ENCODE measurements at regions of chr1 and their contacts with region 1.

Region 1: GRCh38 chr1:115469703-115470476 is 131.8 kb upstream of the NGF start:
- DNase-seq: peak; percentile 80 to 96
- H3K4me3 ChIP-seq: peak overlapping the region; percentile 10; the same call in 1 of the 2 replicates
- H3K27ac ChIP-seq: peak overlapping the region; percentile 81
- H3K4me1 ChIP-seq: peaks cover 58% of the 10 kb centered on the region
- H3K27me3 ChIP-seq: no peaks in the 10 kb centered on the region
- CTCF ChIP-seq: peak; percentile 100

Region 2: DNA sequence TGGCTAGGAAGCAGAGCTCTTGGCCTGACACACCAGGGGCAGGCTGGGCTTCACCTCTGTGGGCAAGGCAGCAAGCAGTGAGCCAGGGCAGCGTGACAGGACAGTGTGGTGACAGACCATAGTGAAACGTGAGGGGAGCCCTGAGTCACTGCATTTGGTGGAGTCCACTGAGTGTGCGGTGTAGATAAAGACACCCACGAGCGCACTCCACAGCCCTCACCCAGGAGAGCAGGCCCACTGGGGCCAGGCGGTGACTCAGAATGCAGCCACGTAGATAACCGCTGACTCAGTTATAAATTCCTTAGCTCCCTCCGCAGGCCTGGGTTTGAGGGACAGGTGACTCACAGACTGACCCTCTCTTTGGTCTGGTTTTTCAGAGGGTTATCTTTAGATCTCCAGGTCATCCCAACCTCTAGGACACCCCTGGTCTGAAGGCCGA is 290.5 kb before region 1 on chr1:
- CTCF ChIA-PET with region 1: no interaction called
- POLR2A ChIA-PET with region 1: no interaction called
- intact Hi-C with region 1: loop called (anchors 1 kb)
- DNase-seq: peak; percentile 92 to 100
- H3K4me3 ChIP-seq: no peak overlapping the region
- H3K27ac ChIP-seq: peak overlapping the region; percentile 89
- H3K4me1 ChIP-seq: peaks cover 57% of the 10 kb centered on the region
- H3K27me3 ChIP-seq: no peaks in the 10 kb centered on the region
- CTCF ChIP-seq: no peak

Region 3: GRCh38 chr1:115411371-115412063 is 58.4 kb before region 1 on chr1:
- CTCF ChIA-PET with region 1: no interaction called
- POLR2A ChIA-PET with region 1: no interaction called
- intact Hi-C with region 1: no loop called
- DNase-seq: peak in 1 of 2 experiments; percentile 97
- H3K4me3 ChIP-seq: no peak overlapping the region
- H3K27ac ChIP-seq: peak overlapping the region; percentile 47
- H3K4me1 ChIP-seq: peaks cover 23% of the 10 kb centered on the region
- H3K27me3 ChIP-seq: no peaks in the 10 kb centered on the region
- CTCF ChIP-seq: no peak

Region 4: DNA sequence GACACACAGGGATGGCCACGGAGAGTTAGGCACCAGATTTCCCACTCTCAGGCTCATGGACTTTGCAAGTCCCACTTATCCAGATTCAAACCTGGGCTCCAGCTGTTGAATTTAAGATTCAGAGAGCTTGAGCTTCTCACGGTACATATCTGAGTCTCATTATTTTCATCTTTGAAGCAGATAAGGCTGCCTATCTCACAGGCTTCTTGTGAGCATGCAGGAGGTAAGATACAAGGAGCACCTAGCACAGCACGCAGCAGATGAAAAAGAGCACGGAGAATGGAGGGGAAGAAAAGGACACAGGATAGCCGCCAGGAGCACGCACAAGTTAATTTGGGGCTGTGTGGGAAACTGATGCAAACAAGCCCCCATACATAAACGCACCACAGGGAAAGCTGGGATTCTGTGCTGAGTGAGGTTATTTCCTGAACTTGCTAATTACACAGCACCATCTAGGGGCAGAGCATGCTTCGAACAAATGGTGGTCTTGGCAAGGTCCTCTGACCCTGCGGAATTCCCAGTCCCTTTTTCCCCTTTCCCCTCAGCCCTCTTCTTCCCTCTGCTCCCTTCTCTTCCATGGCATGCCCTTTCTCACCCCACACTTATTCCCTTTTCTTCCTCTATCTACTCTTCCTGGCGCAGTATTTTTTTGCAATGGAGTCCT is 37.2 kb after region 1 on chr1:
- CTCF ChIA-PET with region 1: interaction called, 7 read pairs
- POLR2A ChIA-PET with region 1: no interaction called
- intact Hi-C with region 1: loop called (anchors 1 kb)
- DNase-seq: peak in 1 of 2 experiments; percentile 17
- H3K4me3 ChIP-seq: no peak overlapping the region
- H3K27ac ChIP-seq: no peak overlapping the region
- H3K4me1 ChIP-seq: peaks cover 16% of the 10 kb centered on the region
- H3K27me3 ChIP-seq: no peaks in the 10 kb centered on the region
- CTCF ChIP-seq: peak; percentile 38

Region 5: DNA sequence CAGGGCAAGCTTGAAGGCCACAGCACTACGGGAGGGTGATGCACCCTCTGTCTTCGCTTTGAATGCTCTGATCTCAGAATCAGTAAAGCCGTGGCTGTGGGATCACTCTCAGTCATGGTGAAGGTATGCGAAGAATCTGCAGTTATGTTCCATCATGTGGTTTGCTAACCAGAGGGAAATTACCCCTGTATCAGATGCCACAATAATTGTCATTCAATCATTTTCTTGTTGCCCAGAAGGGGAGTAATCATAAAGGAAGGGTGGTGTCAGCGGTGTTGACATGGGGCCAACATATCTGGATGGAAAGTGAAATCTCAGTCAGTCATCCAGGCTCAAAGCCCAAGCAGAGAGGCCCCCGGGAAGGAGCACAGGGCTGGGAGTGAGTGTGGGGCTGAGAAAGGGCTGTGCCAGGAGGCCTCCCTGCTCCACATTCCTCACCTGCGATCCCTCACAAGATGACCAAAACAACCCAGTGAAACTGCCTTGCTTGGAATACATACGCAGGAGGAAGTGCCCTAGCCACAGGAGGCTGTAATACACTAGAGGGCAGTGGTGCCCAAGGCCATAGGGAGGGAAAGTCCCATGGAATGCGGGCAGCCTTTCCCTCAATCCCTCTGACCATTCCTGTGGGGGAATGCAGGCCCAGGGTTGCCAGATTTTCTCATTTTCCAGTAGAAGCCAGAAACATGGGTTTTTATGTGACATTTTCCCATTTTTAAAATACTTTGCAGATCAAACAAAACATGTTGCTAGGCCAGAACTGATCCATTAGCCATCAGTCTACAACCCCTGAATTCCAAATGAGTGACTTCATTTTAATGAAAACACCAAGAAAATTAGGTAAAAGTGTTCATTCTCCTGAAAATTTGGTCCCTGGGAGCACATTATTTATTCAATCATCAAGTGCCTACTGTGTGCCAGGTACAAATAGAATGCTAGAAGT is 76.2 kb after region 1 on chr1:
- CTCF ChIA-PET with region 1: interaction called, 3 read pairs
- POLR2A ChIA-PET with region 1: no interaction called
- intact Hi-C with region 1: loop called (anchors 1 kb)
- DNase-seq: peak; percentile 92 to 99
- H3K4me3 ChIP-seq: peak overlapping the region; percentile 9; the same call in 1 of the 2 replicates
- H3K27ac ChIP-seq: peak overlapping the region; percentile 91
- H3K4me1 ChIP-seq: peaks cover 35% of the 10 kb centered on the region
- H3K27me3 ChIP-seq: no peaks in the 10 kb centered on the region
- CTCF ChIP-seq: peak; percentile 82

Region 6: DNA sequence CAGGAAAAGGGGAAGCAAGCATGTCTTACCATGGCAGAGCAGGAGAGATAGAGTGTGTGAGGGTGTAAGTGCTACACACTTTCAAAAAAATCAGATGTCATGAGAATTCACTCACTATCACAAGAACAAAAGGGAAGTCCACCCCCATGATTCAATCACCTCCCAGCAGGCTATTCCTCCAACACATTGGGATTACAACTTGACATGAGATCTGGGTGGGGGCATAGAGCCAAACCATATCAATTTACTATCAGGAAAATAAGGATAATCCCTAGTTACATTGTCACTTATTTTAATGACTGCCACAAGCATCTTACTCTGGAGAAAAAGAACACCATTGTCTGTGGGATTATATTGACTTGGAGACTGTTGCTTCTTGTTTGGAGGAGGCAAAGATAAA is 105.8 kb after region 1 on chr1:
- CTCF ChIA-PET with region 1: no interaction called
- POLR2A ChIA-PET with region 1: interaction called, 14 read pairs
- intact Hi-C with region 1: no loop called
- DNase-seq: no peak
- H3K4me3 ChIP-seq: no peak overlapping the region
- H3K27ac ChIP-seq: no peak overlapping the region
- H3K4me1 ChIP-seq: no peaks in the 10 kb centered on the region
- H3K27me3 ChIP-seq: no peaks in the 10 kb centered on the region
- CTCF ChIP-seq: no peak

Region 7: GRCh38 chr1:115595279-115596079 is 125.6 kb after region 1 on chr1:
- CTCF ChIA-PET with region 1: interaction called, 3 read pairs
- POLR2A ChIA-PET with region 1: no interaction called
- intact Hi-C with region 1: loop called (anchors 1 kb)
- DNase-seq: peak; percentile 87 to 91
- H3K4me3 ChIP-seq: no peak overlapping the region
- H3K27ac ChIP-seq: no peak overlapping the region
- H3K4me1 ChIP-seq: peaks cover 25% of the 10 kb centered on the region
- H3K27me3 ChIP-seq: no peaks in the 10 kb centered on the region
- CTCF ChIP-seq: peak; percentile 99

Measured in PC-9 (cell line).